ENCODE measurements at regions of chr19 and their contacts with region 1.

Region 1: GRCh38 chr19:47561440-47562057 is 11.4 kb downstream of the ZNF541 start:
- DNase-seq: peak; percentile 71
- ATAC-seq: peak; percentile 93
- H3K4me3 ChIP-seq: no peak overlapping the region
- H3K27ac ChIP-seq: peak overlapping the region; percentile 61
- H3K4me1 ChIP-seq: peaks cover 20% of the 10 kb centered on the region; the same call in 1 of the 2 replicates
- H3K27me3 ChIP-seq: no peaks in the 10 kb centered on the region
- CTCF ChIP-seq: no peak

Region 2: GRCh38 chr19:47058621-47059020 is 502.9 kb before region 1 on chr19:
- CTCF ChIA-PET with region 1: no interaction called
- POLR2A ChIA-PET with region 1: interaction called, 19 read pairs
- intact Hi-C with region 1: no loop called
- DNase-seq: no peak
- ATAC-seq: no peak
- H3K4me3 ChIP-seq: no peak overlapping the region
- H3K27ac ChIP-seq: no peak overlapping the region
- H3K4me1 ChIP-seq: no peaks in the 10 kb centered on the region
- H3K27me3 ChIP-seq: no peaks in the 10 kb centered on the region
- CTCF ChIP-seq: no peak

Measured in PC-3 (cell line).